ENCODE measurements at regions of chr5 and their contacts with region 1.

Region 1: DNA sequence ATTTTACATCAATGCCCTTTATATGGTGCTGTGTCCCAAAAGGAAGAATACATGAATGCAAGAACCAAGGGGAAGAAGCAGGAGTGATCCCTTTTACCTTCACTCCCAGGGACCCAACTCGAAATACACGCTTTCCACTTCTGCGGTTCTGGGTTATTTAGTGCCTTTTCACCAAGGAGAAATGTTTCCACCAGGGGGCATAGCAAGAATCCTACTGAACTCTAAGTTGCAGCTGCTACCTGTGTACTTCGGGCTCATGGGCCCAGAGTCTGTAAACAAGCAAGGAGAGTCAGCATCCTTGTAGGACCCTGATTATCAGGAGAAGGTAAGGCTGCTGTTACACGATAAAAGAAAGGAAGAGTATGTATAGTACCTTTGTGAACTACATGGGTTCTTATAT is 45.7 kb downstream of the DPYSL3 start:
- DNase-seq: peak; percentile 68
- H3K4me3 Mint-ChIP-seq: no peak overlapping the region
- H3K27ac Mint-ChIP-seq: no peak overlapping the region
- H3K4me1 Mint-ChIP-seq: no peaks in the 10 kb centered on the region
- H3K27me3 Mint-ChIP-seq: no peaks in the 10 kb centered on the region
- CTCF ChIP-seq: peak; percentile 63

Region 2: GRCh38 chr5:147483961-147484707 is 19.9 kb after region 1 on chr5:
- CTCF ChIA-PET with region 1: interaction called, 18 read pairs
- POLR2A ChIA-PET with region 1: no interaction called
- intact Hi-C with region 1: no loop called
- DNase-seq: no peak
- H3K4me3 Mint-ChIP-seq: no peak overlapping the region
- H3K27ac Mint-ChIP-seq: peak overlapping the region; percentile 43
- H3K4me1 Mint-ChIP-seq: no peaks in the 10 kb centered on the region
- H3K27me3 Mint-ChIP-seq: no peaks in the 10 kb centered on the region
- CTCF ChIP-seq: no peak

Measured in MCF 10A (cell line).